Calu3 (cell line): ENCODE measurements at regions of chr3 and their contacts with region 1.

Region 1: GRCh38 chr3:38131621-38132369 is 5.1 kb downstream of the ACAA1 start:
- DNase-seq: no peak
- H3K4me3 Mint-ChIP-seq: no peak overlapping the region
- H3K27ac Mint-ChIP-seq: no peak overlapping the region
- H3K4me1 Mint-ChIP-seq: peaks cover 44% of the 10 kb centered on the region
- H3K27me3 Mint-ChIP-seq: no peaks in the 10 kb centered on the region
- CTCF ChIP-seq: no peak

Region 2: GRCh38 chr3:38247366-38248035 is 115.7 kb after region 1 on chr3:
- CTCF ChIA-PET with region 1: interaction called, 4 read pairs
- intact Hi-C with region 1: loop called (anchors 1 kb)
- DNase-seq: peak; percentile 15
- H3K4me3 Mint-ChIP-seq: no peak overlapping the region
- H3K27ac Mint-ChIP-seq: peak overlapping the region; percentile 76
- H3K4me1 Mint-ChIP-seq: peaks cover 20% of the 10 kb centered on the region
- H3K27me3 Mint-ChIP-seq: no peaks in the 10 kb centered on the region
- CTCF ChIP-seq: no peak